Sigmoid colon (tissue), 7 donors: ENCODE measurements at regions of chr5 and their contacts with region 1.

Region 1: DNA sequence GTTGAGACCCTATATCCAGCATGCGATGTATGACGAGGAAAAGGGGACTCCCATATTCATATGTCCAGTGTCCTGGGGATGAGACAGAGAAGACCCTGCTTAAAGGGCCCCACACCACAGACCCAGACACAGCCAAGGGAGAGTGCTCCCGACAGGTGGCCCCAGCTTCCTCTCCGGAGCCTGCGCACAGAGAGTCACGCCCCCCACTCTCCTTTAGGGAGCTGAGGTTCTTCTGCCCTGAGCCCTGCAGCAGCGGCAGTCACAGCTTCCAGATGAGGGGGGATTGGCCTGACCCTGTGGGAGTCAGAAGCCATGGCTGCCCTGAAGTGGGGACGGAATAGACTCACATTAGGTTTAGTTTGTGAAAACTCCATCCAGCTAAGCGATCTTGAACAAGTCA is 17.1 kb downstream of the BTNL3 start:
- DNase-seq: no peak
- H3K4me3 ChIP-seq: no peak overlapping the region
- H3K27ac ChIP-seq: no peak overlapping the region
- H3K4me1 ChIP-seq: no peaks in the 10 kb centered on the region
- H3K27me3 ChIP-seq: peaks cover 0 to 11% (median 0%) of the 10 kb centered on the region in 3 donors
- CTCF ChIP-seq: no peak
- EP300 ChIP-seq: no peak
- POLR2A ChIP-seq: no peak

Region 2: GRCh38 chr5:180950291-180950949 is 55.4 kb before region 1 on chr5:
- intact Hi-C with region 1: loop called (anchors 5 kb)
- DNase-seq: no peak
- H3K4me3 ChIP-seq: no peak overlapping the region
- H3K27ac ChIP-seq: no peak overlapping the region
- H3K4me1 ChIP-seq: no peaks in the 10 kb centered on the region
- H3K27me3 ChIP-seq: no peaks in the 10 kb centered on the region
- CTCF ChIP-seq: no peak
- EP300 ChIP-seq: no peak
- POLR2A ChIP-seq: no peak